Psoas muscle (tissue), 8 donors: ENCODE measurements at regions of chr10 and their contacts with region 1.

Region 1: DNA sequence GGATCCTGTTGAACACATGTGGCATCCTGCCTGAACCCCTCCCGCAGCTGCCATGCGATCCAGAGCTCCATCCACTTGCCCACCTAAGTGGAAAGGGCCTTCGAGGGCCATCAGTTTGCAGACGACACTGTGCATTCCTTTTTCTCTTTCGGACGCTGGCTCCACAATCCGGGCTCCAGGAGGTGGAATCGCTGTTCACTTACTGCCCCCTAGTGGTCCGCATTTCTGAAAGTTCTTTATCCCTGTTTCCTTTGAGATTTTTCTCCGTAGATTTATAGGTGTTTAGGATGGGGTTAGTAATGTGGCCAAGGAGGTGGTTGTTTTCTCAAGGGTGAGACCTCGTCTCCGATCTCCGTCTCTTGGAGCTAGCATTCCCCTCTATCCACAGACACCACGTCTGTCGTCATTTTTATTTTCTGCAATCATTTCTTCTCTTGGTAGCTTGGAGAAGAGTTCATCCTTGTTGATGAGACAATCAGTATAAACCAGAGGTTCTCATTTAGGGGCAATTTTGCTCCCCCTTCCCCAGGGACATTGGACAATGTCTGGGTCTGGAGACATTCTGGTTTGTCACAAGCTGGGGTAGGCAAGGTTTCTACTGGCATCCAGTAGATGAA is 204.6 kb downstream of the ARHGAP21 start:
- DNase-seq: peak; percentile 27 to 67
- ATAC-seq: peak; percentile 64 to 79 (median 75)
- H3K4me3 ChIP-seq: no peak overlapping the region
- H3K27ac ChIP-seq: peak overlapping the region; percentile 59
- H3K4me1 ChIP-seq: peaks cover 16% of the 10 kb centered on the region
- H3K27me3 ChIP-seq: no peaks in the 10 kb centered on the region
- CTCF ChIP-seq: peak; percentile 77

Region 2: DNA sequence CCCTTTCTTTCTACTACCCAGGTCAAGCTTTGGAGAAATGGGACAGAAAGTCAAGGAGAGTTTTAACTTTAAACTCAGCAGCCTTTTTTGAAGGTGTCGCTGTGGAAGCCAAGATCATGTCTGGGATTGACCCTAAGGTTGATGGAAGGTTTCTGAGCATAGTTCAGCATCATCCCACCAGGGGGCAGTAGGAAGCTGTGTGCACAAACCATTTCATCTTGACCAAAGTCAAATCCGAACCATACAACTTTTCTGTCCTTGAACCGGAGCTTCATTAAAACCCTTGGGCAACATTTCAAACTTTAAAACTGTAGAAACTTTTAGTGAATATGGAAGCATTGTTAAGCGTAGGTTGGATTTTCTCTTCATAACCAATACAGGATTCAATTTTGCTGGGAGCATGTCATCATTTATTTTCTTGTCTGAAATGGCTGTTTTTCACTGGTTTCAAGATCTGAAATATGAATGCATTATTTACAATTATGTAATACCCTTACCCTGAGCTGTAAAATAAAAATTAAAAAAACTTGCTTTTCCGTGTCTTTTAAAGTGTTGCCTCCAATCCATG is 524.5 kb before region 1 on chr10:
- intact Hi-C with region 1: loop called (anchors 5 kb)
- DNase-seq: peak; percentile 33 to 67
- ATAC-seq: peak; percentile 83 to 95 (median 90)
- H3K4me3 ChIP-seq: no peak overlapping the region
- H3K27ac ChIP-seq: no peak overlapping the region
- H3K4me1 ChIP-seq: peaks cover 6% of the 10 kb centered on the region
- H3K27me3 ChIP-seq: no peaks in the 10 kb centered on the region
- CTCF ChIP-seq: peak; percentile 93

Region 3: DNA sequence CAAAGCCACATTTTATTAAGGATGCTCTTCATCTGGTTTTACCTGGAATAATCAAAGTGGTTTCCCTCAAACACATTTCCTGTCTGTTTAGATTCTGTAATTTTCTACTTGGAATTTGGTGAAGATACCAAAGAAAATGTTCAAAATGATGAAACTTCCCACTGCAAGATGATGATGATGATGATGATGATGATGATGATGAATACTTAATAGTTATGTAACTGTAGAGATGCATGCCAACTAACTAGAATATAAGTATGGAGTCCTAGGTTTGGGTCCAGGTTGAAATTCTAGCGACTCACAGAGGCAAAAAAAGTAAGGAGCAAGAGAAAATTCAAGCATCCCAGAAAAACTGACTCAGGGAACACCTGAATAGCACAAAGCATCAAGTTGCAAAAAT is 414.2 kb before region 1 on chr10:
- intact Hi-C with region 1: loop called in 1 of 2 experiments (anchors 5 kb)
- DNase-seq: no peak
- ATAC-seq: no peak
- H3K4me3 ChIP-seq: no peak overlapping the region
- H3K27ac ChIP-seq: no peak overlapping the region
- H3K4me1 ChIP-seq: peaks cover 3% of the 10 kb centered on the region
- H3K27me3 ChIP-seq: no peaks in the 10 kb centered on the region
- CTCF ChIP-seq: no peak

Region 4: DNA sequence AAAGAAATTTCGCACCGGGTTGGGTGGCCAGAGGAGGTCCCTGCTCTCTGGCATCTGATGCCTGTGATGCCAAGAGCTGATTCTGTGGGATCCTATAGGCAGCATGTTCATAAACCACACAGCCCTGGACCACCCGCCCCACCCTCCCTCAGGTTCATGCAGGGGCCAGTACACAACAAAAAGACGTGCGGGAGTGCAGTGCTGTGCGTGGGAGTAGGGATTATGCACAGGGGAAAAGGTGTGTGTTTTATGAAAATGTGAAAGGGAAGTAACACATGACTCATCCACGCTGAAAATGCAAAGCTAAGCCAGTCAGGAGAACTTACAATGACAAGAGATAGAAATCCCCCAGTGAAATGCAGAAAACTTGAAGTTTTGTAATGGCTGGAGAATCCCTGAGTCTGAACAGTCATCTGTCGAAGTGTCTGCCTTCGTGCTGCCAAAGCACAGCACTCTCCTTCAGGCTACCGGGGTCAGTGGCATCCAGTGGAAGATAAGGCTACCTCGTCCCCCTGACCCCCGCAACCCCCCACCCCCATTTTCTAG is 309.1 kb before region 1 on chr10:
- intact Hi-C with region 1: loop called in 1 of 2 experiments (anchors 10 kb)
- DNase-seq: peak in 1 of 2 donors; percentile 20
- ATAC-seq: peak in 2 of 4 donors; percentile 6 to 10
- H3K4me3 ChIP-seq: peak overlapping the region; percentile 67
- H3K27ac ChIP-seq: peak overlapping the region; percentile 93
- H3K4me1 ChIP-seq: peaks cover 57% of the 10 kb centered on the region
- H3K27me3 ChIP-seq: no peaks in the 10 kb centered on the region
- CTCF ChIP-seq: no peak

Region 5: DNA sequence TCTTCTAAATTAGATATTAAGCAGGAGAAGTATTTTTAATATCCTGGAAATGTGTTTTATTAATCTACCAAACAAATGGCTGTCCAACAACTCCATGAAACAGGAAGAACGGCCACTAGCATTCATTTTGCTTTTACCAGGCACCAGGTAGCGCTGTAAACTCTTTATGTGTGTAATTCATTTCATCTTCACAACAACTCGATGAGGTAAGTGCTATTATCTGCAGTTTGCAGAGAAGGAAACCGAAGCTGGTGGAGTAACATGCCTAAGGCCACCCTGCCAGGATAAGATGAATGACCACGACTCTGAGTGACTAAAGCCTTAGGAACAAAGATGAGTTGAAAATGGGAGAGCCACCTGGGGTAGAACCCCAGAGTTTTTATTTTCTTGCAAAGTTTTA is 209.0 kb before region 1 on chr10:
- intact Hi-C with region 1: loop called in 1 of 2 experiments (anchors 2 kb)
- DNase-seq: no peak
- ATAC-seq: peak; percentile 52 to 70 (median 66)
- H3K4me3 ChIP-seq: no peak overlapping the region
- H3K27ac ChIP-seq: peak overlapping the region; percentile 77
- H3K4me1 ChIP-seq: peaks cover 47% of the 10 kb centered on the region
- H3K27me3 ChIP-seq: no peaks in the 10 kb centered on the region
- CTCF ChIP-seq: peak; percentile 29

Region 6: DNA sequence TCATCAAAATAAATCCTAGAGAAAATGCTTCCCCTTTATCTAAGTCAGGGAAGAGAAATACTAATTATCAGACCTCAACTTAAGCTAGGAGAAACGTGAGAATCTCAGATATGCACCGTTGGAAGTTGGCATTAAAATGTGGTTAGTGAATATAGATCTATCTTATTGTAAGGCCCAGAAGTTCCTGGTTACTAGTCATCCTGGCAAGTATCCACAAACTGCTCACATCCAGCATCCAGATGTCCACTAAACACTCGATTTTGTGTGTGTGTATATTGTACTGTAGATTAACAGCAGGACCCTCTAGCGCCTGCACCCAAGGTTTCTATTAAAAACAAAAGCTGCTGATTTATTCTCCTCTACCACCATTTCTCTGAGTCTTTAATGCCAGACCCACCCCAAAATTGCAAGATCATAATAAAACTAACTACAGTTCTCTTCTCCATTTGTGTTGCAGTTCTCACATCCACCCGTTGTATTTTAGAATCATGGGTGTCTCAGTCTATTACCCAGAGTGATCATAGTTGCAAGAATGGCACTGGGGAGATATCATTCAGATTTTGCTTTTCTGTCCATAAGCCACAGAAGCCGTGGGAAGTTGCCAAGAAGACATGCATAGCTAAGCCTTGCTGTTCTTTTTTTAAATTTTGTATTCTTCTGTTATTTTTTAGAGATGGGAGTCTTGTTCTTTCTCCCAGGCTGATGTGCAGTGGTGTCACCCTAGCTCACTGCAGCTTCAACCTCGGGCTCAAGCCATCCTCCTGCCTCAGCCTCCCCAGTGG is 144.8 kb before region 1 on chr10:
- intact Hi-C with region 1: loop called in 1 of 2 experiments (anchors 5 kb)
- DNase-seq: no peak
- ATAC-seq: no peak
- H3K4me3 ChIP-seq: no peak overlapping the region
- H3K27ac ChIP-seq: no peak overlapping the region
- H3K4me1 ChIP-seq: peaks cover 42% of the 10 kb centered on the region
- H3K27me3 ChIP-seq: no peaks in the 10 kb centered on the region
- CTCF ChIP-seq: no peak

Region 7: DNA sequence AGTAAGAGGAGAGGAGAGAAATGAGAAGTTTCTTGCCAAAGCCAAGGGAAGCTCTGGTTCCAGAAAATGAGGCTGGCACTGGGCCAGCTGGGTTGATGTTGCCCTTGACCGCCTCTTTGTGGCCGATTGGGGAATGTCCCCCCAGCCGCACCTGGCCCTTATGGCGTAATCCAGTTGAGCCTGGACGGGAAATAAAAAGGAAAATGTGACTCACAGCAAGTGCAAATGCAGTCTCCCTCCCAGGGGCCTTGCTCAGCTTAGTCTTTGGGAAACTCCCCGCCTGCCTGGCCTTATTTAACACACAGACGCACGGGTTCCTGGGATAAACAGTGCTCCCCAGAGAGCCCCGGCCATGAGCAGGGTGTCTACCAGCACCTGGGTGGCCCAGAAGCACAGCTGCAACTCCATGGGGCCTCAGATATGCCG is 135.4 kb before region 1 on chr10:
- intact Hi-C with region 1: loop called in 1 of 2 experiments (anchors 5 kb)
- DNase-seq: peak; percentile 93 to 97
- ATAC-seq: peak; percentile 89 to 93 (median 91)
- H3K4me3 ChIP-seq: peak overlapping the region; percentile 21
- H3K27ac ChIP-seq: peak overlapping the region; percentile 89
- H3K4me1 ChIP-seq: peaks cover 45% of the 10 kb centered on the region
- H3K27me3 ChIP-seq: no peaks in the 10 kb centered on the region
- CTCF ChIP-seq: peak; percentile 54